ENCODE measurements at regions of chr3 and their contacts with region 1.

Region 1: DNA sequence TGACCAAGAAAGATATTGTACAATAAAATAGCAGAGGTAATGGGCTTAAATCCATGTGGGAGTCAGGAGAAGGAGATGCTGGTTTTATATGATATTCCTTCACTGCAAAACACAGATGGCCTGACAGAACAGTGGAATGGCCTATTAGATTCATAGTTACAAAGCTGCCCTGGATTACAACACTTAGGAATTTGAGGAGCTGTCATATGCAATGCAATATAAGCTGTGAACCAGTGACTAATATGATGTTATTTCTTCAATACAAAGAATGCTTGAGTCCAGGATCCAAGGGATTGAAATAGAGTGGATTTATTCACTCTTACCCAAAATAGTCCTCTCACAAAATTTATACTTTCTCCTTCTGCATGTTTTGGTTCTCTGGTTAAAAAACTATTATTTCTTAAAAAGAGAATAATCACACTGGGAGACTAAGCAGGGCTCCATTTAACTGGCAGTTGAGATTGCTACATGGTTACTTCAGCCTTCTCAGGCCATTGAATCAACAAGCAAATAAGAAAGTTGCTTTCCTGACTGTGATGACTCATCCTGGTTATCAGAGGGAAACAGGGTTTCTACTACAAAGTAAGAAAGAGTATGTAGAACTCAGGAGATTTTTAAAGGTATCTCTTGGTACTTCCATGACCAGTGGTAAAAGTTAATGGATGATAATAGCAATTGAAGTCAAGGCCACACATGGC is 79.8 kb upstream of the ZPLD1 start:
- DNase-seq: peak; percentile 85
- ATAC-seq: peak; percentile 88
- H3K4me3 ChIP-seq: no peak overlapping the region
- H3K27ac ChIP-seq: peak overlapping the region; percentile 55
- H3K4me1 ChIP-seq: peaks cover 20% of the 10 kb centered on the region
- H3K27me3 ChIP-seq: no peaks in the 10 kb centered on the region
- CTCF ChIP-seq: no peak

Region 2: DNA sequence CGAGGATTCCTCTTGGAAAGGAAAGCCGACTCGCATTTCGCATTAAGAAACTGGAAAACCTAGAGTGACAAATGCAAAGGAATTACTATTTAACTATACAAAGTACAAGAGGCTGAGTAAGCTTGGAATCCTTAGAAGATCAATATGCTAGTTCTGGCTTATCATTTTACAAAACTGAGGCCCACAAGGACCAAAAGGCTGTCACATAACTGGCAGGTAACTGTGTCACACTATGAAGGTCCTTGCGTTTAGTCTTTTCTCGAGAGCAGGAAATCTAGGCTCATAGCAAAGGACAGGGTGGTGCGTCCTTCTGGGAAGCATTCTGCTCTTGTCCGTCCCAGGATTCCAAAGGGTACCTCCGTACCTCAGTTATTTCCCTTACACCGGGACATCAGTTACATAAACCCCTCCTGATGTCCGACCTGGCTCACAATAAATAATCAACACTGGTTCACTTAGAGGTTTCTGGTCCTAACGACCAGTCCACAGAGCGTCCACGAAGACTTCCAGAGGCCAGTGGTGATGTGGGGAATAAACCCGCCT is 669.0 kb before region 1 on chr3:
- CTCF ChIA-PET with region 1: no interaction called
- POLR2A ChIA-PET with region 1: no interaction called
- intact Hi-C with region 1: no loop called
- DNase-seq: no peak
- ATAC-seq: peak; percentile 7; the same call in 1 of the 2 replicates
- H3K4me3 ChIP-seq: peak overlapping the region; percentile 89
- H3K27ac ChIP-seq: peak overlapping the region; percentile 69
- H3K4me1 ChIP-seq: peaks cover 27% of the 10 kb centered on the region
- H3K27me3 ChIP-seq: no peaks in the 10 kb centered on the region
- CTCF ChIP-seq: no peak

Region 3: DNA sequence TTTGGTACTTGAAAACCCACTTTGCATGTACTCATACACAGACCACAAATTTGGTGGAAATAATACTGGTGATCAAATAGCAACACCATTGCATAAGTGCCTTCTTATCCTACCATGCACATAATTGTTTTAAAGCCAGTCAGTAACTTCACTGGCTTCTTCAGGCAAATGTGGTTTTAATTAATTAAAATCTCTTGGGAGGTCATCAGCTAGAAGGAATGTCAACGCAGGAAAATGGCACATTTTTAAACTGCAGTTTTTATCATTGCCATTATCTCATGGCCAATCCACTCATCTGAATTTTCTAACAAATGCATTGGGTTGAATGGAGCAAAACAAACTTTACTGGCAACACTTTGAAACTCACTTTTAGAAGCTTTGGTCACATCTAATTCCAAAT is 25.9 kb before region 1 on chr3:
- CTCF ChIA-PET with region 1: no interaction called
- POLR2A ChIA-PET with region 1: no interaction called
- intact Hi-C with region 1: no loop called
- DNase-seq: no peak
- ATAC-seq: no peak
- H3K4me3 ChIP-seq: no peak overlapping the region
- H3K27ac ChIP-seq: no peak overlapping the region
- H3K4me1 ChIP-seq: peaks cover 18% of the 10 kb centered on the region
- H3K27me3 ChIP-seq: no peaks in the 10 kb centered on the region
- CTCF ChIP-seq: no peak

Region 4: DNA sequence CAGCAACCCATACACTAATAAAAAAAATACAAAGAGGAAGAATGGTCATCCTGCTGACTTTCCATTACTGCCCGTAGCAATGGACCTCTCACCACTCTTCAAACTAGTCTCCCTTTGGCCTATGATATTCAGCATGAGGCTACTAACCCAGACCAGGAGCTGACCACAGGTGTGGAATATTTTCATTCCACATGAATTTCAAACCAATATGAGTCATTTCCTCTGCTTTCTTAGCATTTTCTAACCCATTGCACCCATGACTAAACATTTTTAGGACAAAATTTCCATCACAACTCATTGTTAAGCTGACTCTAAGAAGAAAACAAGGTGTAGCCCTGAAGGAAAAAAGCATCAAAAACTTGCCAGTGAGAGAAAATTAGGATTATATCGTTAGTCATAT is 45.8 kb after region 1 on chr3:
- CTCF ChIA-PET with region 1: no interaction called
- POLR2A ChIA-PET with region 1: no interaction called
- intact Hi-C with region 1: loop called (anchors 2 kb)
- DNase-seq: peak; percentile 94
- ATAC-seq: peak; percentile 94
- H3K4me3 ChIP-seq: peak overlapping the region; percentile 10; the same call in 1 of the 2 replicates
- H3K27ac ChIP-seq: peak overlapping the region; percentile 86
- H3K4me1 ChIP-seq: peaks cover 34% of the 10 kb centered on the region
- H3K27me3 ChIP-seq: no peaks in the 10 kb centered on the region
- CTCF ChIP-seq: no peak

Measured in PC-3 (cell line).